PC-9 (cell line): ENCODE measurements at regions of chr4 and their contacts with region 1.

Region 1: GRCh38 chr4:149370785-149371420 is 444.7 kb downstream of the IQCM start:
- DNase-seq: peak in 1 of 2 experiments; percentile 4
- H3K4me3 ChIP-seq: no peak overlapping the region
- H3K27ac ChIP-seq: no peak overlapping the region
- H3K4me1 ChIP-seq: no peaks in the 10 kb centered on the region
- H3K27me3 ChIP-seq: no peaks in the 10 kb centered on the region
- CTCF ChIP-seq: peak; percentile 58

Region 2: GRCh38 chr4:149549911-149550310 is 179.0 kb after region 1 on chr4:
- CTCF ChIA-PET with region 1: no interaction called
- POLR2A ChIA-PET with region 1: no interaction called
- intact Hi-C with region 1: loop called (anchors 5 kb)
- DNase-seq: peak in 1 of 2 experiments; percentile 1
- H3K4me3 ChIP-seq: no peak overlapping the region
- H3K27ac ChIP-seq: no peak overlapping the region
- H3K4me1 ChIP-seq: no peaks in the 10 kb centered on the region
- H3K27me3 ChIP-seq: no peaks in the 10 kb centered on the region
- CTCF ChIP-seq: no peak

Region 3: DNA sequence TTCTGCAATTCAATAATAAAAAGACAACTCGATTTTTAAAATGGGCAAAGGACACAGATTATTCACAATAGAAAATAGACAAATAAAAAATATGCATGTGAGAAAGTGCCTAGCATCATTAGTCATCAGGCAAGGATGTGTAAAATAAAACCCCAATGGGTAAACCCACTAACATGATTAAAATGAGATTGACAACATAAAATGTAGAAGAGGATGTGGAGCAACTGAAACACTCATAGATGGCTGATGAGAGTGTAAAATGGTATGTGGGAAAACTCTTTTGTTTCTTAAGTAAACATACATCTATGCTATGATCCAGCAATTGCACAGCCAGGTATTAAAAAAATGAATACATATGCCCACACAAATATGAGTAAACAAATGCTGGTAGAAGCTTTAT is 267.2 kb after region 1 on chr4:
- CTCF ChIA-PET with region 1: no interaction called
- POLR2A ChIA-PET with region 1: no interaction called
- intact Hi-C with region 1: loop called (anchors 10 kb)
- DNase-seq: no peak
- H3K4me3 ChIP-seq: no peak overlapping the region
- H3K27ac ChIP-seq: no peak overlapping the region
- H3K4me1 ChIP-seq: no peaks in the 10 kb centered on the region
- H3K27me3 ChIP-seq: no peaks in the 10 kb centered on the region
- CTCF ChIP-seq: no peak

Region 4: GRCh38 chr4:149715822-149716611 is 345.1 kb after region 1 on chr4:
- CTCF ChIA-PET with region 1: no interaction called
- POLR2A ChIA-PET with region 1: no interaction called
- intact Hi-C with region 1: no loop called
- DNase-seq: no peak
- H3K4me3 ChIP-seq: no peak overlapping the region
- H3K27ac ChIP-seq: no peak overlapping the region
- H3K4me1 ChIP-seq: no peaks in the 10 kb centered on the region
- H3K27me3 ChIP-seq: no peaks in the 10 kb centered on the region
- CTCF ChIP-seq: no peak

Region 5: GRCh38 chr4:149897783-149898182 is 526.9 kb after region 1 on chr4:
- CTCF ChIA-PET with region 1: no interaction called
- POLR2A ChIA-PET with region 1: no interaction called
- intact Hi-C with region 1: loop called (anchors 1 kb)
- DNase-seq: no peak
- H3K4me3 ChIP-seq: no peak overlapping the region
- H3K27ac ChIP-seq: no peak overlapping the region
- H3K4me1 ChIP-seq: no peaks in the 10 kb centered on the region
- H3K27me3 ChIP-seq: no peaks in the 10 kb centered on the region
- CTCF ChIP-seq: peak; percentile 54